HAP-1 (cell line): ENCODE measurements at regions of chr13 and their contacts with region 1.

Region 1: DNA sequence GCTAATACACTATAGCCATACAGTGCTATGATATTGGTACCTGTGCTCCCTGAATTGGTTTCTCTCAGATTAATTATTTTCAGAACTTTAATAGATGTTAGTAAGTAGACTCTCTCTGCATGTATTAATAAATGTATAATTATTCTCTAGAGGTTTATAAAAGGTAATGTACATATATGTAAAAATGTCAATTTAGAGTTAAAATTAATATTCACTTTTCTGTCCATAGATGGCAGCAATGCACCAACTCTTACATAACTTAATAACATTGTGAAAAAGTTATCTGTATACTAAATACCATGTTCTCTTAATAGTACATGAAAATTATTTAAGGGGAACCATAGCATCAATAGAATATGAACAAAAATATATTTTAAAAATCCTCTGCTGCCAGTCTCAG is 515.0 kb upstream of the KLHL1 start:
- DNase-seq: no peak
- H3K4me3 ChIP-seq: no peak overlapping the region
- H3K4me1 ChIP-seq: peaks cover 23% of the 10 kb centered on the region
- H3K27me3 ChIP-seq: no peaks in the 10 kb centered on the region

Region 2: DNA sequence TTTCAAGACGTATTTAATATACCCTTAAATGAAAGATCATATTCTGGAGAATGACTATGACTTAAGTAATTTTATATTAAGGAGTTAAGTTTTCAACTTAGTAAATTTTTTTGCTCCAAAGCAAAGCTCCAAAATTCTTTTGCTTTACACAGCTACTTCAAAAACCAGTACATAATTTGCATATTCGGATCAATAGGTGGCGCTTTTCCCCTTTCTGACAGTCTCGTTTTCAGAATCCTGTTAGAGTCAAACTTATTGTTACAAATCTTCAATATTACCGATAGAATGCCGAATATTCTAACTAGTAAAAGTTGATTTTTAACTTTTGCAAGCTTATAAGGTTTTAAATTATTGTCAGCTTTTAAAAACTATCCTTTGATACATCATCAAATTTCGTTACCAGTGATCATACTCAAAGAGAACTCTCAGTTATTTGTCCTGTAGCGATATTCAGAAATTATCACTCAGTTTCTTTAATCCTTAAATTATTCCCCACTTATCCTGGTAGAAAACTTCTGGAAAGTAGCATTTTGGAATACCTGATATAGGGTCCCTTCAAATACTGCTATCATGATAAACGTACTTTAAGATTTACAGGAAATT is 337.7 kb after region 1 on chr13:
- in situ Hi-C with region 1: loop called (anchors 25 kb)
- DNase-seq: peak; percentile 50 to 69
- H3K4me3 ChIP-seq: no peak overlapping the region
- H3K4me1 ChIP-seq: peaks cover 8% of the 10 kb centered on the region
- H3K27me3 ChIP-seq: no peaks in the 10 kb centered on the region

Region 3: GRCh38 chr13:71524613-71525304 is 901.5 kb after region 1 on chr13:
- in situ Hi-C with region 1: loop called (anchors 25 kb)
- DNase-seq: no peak
- H3K4me3 ChIP-seq: no peak overlapping the region
- H3K4me1 ChIP-seq: peaks cover 9% of the 10 kb centered on the region
- H3K27me3 ChIP-seq: no peaks in the 10 kb centered on the region